Activated T-helper 2 cell treated with anti-CD3 and anti-CD28 coated beads, Interferon-gamma antibody, Interleukin-2, Interleukin-4, amounts not matched to agents 10 μg/mL and 5 μg/mL and 100 μg/mL, durations not matched to agents 14 hours and 24 hours and 36 hours (primary cell): ENCODE measurements at regions of chr20 and their contacts with region 1.

Region 1: GRCh38 chr20:62616728-62617621 is 25.3 kb upstream of the SLCO4A1 start:
- DNase-seq: peak; percentile 62
- H3K4me3 Mint-ChIP-seq: peak overlapping the region; percentile 74
- H3K27ac Mint-ChIP-seq: peak overlapping the region; percentile 92
- H3K4me1 Mint-ChIP-seq: peaks cover 29% of the 10 kb centered on the region
- H3K27me3 Mint-ChIP-seq: peaks cover 10% of the 10 kb centered on the region

Region 2: DNA sequence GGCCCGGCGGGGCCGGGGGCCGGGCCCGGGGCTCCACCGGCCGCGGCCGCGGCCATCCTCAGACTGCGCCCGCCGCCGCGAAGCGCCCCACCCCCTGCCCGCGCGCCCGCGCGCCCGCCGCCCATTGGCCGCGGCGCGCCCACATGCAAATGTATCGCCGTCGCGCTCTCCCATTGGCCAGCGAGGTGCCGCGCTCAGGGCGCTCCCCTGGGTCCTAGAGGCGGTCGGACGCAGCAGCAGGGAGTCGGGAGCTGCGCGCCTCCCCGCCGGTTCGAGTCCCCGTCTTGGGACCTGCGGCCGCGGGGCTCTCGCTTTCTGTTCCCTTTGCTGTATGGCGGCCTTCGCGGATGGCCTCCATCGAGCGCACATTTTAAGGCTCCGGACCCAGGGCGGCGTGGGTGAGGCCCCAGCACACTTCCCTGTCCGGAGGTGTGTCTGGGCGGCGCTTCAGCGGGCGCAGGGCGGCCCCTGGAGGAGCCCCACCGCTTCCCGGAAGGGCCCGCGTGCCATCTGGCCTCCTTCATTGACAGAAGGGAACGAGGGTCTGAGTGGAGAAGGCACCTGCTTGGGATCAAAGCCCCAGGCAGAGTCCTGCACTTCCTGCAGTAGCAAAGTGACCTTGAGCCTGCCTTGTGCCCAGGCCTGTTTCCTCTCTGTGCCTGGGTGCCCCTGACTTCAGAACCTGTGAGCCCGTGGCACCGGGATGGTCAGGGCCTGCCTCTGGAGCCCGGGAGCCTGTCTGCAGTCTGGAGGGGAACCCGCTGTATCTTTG is 209.6 kb before region 1 on chr20 and contains the start of gene CABLES2:
- intact Hi-C with region 1: loop called (anchors 10 kb)
- DNase-seq: peak; percentile 90
- H3K4me3 Mint-ChIP-seq: peak within 1 kb of the TSS; percentile 81
- H3K27ac Mint-ChIP-seq: peak within 1 kb of the TSS; percentile 84
- H3K4me1 Mint-ChIP-seq: peaks cover 19% of the 10 kb centered on the region
- H3K27me3 Mint-ChIP-seq: no peaks in the 10 kb centered on the region
- total RNA-seq, gene CABLES2: 12.5 and 12.6 TPM in 2 replicates

Region 3: GRCh38 chr20:62489186-62489931 is 127.6 kb before region 1 on chr20:
- intact Hi-C with region 1: no loop called
- DNase-seq: no peak
- H3K4me3 Mint-ChIP-seq: no peak overlapping the region
- H3K27ac Mint-ChIP-seq: no peak overlapping the region
- H3K4me1 Mint-ChIP-seq: no peaks in the 10 kb centered on the region
- H3K27me3 Mint-ChIP-seq: peaks cover 28% of the 10 kb centered on the region

Region 4: DNA sequence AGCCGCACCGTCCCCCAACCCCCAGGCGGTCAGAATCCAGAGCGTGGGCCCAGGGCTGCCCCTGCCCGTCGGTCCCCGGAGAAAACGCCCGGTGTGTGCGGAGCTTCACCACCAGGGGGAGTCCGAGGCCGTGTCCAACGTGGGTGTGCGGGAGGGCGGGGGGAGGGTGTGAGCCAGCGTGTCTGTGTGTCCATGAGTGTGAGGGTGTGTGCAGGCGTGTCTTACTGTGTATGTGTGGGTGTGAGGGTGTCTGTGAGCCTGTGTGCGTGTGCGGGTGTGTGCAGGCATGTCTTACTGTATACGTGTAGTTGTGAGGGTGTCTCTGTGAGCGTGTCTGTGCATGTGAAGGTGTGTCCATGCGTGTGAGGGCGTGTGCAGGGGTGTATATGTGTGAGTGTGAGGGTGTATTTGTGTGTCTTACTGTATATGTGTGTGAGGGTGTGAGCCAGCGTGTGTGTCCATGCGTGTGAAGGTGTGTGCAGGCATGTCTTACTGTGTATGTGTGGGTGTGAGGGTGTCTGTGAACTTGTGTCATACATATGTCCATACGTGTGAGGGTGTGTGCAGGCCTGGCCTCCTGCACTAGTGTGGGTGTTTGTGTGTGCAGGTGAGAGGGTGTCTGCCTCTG is 116.6 kb before region 1 on chr20:
- intact Hi-C with region 1: loop called (anchors 1 kb)
- DNase-seq: peak; percentile 65
- H3K4me3 Mint-ChIP-seq: no peak overlapping the region
- H3K27ac Mint-ChIP-seq: peak overlapping the region; percentile 85
- H3K4me1 Mint-ChIP-seq: peaks cover 23% of the 10 kb centered on the region
- H3K27me3 Mint-ChIP-seq: no peaks in the 10 kb centered on the region

Region 5: DNA sequence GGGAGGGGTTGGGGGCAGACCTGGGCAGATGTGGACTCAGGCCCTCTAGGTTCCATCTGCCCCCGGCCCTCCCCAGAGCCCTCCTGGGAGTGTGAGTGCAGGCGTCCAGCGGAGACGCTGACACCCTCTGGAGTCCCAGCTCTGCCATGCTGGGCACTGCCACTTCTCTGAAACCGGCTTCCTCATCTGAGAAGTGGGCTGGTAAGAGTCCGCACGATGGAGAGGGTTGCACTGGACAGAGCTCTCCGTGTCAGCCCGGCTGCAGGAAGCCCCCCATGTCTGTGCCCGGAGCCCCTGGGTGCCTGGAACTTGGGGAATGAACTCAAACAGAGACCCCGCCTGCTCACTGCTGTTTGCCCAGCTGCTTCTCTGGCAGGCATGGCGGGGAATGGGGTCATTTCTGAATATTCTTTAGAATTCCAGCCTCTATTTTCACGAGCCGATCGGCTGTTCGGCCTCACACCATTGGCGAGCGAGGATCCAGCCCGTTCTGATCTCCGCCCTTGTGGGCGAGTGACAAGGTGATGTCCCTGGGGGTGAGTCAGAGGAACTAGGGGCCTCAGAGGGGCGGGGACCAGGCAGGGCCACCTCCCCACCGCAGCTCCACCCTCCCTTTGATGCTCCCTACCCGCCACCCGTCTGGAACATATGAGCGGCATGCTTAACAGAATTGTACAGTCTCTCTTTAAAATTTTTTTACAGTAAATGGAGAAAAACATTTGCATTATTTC is 93.3 kb before region 1 on chr20:
- intact Hi-C with region 1: loop called (anchors 5 kb)
- DNase-seq: peak; percentile 63
- H3K4me3 Mint-ChIP-seq: peak overlapping the region; percentile 17
- H3K27ac Mint-ChIP-seq: peak overlapping the region; percentile 76
- H3K4me1 Mint-ChIP-seq: peaks cover 13% of the 10 kb centered on the region
- H3K27me3 Mint-ChIP-seq: no peaks in the 10 kb centered on the region

Region 6: GRCh38 chr20:62536871-62537401 is 80.0 kb before region 1 on chr20:
- intact Hi-C with region 1: no loop called
- DNase-seq: no peak
- H3K4me3 Mint-ChIP-seq: no peak overlapping the region
- H3K27ac Mint-ChIP-seq: no peak overlapping the region
- H3K4me1 Mint-ChIP-seq: no peaks in the 10 kb centered on the region
- H3K27me3 Mint-ChIP-seq: no peaks in the 10 kb centered on the region

Region 7: GRCh38 chr20:62603021-62603906 is 13.7 kb before region 1 on chr20:
- intact Hi-C with region 1: loop called (anchors 2 kb)
- DNase-seq: peak; percentile 34
- H3K4me3 Mint-ChIP-seq: peak overlapping the region; percentile 66
- H3K27ac Mint-ChIP-seq: peak overlapping the region; percentile 56
- H3K4me1 Mint-ChIP-seq: peaks cover 37% of the 10 kb centered on the region
- H3K27me3 Mint-ChIP-seq: peaks cover 8% of the 10 kb centered on the region

Region 8: DNA sequence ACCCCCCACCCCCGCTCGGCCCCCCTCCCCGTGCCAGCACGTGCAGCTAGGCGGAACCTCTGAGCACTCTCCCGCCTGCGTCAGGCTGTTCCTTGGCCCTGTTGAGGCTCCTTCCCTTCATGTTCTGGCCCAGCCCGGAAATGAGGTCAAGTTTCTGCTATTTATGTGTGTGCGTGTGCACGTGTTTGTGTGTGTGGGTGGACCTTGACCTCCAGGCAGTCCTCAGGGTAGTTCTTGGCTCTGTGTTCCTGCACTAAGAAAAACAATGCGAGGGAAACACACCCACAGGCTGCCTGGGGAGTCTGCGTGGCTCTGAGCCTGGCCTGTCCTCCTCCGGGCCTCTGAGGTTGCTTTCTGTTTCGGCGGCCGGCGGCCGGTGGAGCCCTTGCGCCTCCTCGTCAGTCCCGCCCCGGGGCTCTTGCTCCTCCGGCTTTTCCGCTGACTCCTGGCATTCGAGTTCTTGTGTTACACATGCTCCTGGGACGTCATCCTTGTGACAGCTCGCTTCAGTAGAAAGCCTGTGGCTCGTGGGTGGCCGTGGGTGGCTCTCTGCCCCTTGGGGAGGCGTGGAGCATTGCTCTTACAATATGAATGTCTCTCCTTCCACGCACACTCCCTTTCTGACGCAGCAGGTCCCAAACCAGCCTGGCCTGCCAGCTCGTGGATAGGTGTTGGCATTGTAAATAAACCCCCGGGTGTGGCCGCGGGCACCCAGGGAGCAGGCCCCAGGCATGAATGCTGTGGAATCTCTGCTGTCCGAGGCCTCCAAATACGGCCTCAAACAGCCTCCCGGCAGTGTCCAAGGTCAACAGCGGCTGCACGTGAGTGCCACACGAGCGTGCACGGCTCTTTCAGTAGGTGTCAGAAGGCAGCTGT is 35.3 kb after region 1 on chr20:
- intact Hi-C with region 1: loop called (anchors 5 kb)
- DNase-seq: peak; percentile 66
- H3K4me3 Mint-ChIP-seq: peak overlapping the region; percentile 72
- H3K27ac Mint-ChIP-seq: peak overlapping the region; percentile 90
- H3K4me1 Mint-ChIP-seq: peaks cover 40% of the 10 kb centered on the region
- H3K27me3 Mint-ChIP-seq: no peaks in the 10 kb centered on the region

Region 9: GRCh38 chr20:62808211-62808865 is 191.4 kb after region 1 on chr20:
- intact Hi-C with region 1: loop called (anchors 5 kb)
- DNase-seq: peak; percentile 62
- H3K4me3 Mint-ChIP-seq: peak overlapping the region; percentile 57
- H3K27ac Mint-ChIP-seq: no peak overlapping the region
- H3K4me1 Mint-ChIP-seq: peaks cover 20% of the 10 kb centered on the region
- H3K27me3 Mint-ChIP-seq: no peaks in the 10 kb centered on the region

Region 10: DNA sequence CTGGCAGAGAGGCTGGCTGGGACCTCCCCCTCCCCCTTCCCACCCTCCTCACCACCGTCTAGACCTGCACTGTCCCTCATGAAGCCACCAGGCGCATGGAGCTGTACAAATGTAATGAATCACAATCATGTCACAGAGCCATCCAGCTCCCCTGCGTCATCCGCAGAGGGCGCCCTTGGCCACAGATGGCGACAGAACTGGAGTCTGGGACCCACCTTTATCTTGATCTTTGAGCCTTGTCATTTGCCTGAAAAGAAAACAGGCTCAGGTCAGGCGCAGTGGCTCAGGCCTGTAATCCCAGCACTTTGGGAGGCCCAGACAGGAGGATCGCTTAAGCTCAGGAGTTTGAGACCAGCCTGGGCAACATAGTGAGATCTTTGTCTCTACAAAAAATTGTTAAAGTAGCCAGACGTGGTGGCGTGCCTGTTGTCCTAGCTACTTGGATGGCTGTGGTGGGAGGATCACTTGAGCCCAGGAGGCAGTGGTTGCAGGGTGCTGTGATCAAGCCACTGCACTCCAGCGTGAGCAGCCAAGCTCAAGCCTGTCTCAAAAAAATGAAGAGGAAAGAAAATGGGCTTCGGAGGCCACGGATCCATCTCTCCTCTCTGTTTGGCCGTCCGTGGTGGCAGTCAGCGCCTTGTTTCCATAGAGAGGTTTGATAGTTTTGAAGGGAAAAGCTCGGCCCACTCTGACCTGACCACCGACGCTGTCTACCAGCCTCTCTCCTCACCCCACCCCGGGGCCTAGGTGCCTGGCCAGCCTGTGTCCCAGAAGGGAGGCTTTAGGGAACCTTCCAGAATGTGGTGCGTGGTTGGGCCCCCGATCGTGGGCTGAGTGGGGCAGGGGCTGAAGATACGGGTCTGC is 206.0 kb after region 1 on chr20:
- intact Hi-C with region 1: no loop called
- DNase-seq: peak; percentile 52
- H3K4me3 Mint-ChIP-seq: no peak overlapping the region
- H3K27ac Mint-ChIP-seq: no peak overlapping the region
- H3K4me1 Mint-ChIP-seq: no peaks in the 10 kb centered on the region
- H3K27me3 Mint-ChIP-seq: peaks cover 9% of the 10 kb centered on the region